ENCODE measurements at regions of chr16 and their contacts with region 1.

Region 1: DNA sequence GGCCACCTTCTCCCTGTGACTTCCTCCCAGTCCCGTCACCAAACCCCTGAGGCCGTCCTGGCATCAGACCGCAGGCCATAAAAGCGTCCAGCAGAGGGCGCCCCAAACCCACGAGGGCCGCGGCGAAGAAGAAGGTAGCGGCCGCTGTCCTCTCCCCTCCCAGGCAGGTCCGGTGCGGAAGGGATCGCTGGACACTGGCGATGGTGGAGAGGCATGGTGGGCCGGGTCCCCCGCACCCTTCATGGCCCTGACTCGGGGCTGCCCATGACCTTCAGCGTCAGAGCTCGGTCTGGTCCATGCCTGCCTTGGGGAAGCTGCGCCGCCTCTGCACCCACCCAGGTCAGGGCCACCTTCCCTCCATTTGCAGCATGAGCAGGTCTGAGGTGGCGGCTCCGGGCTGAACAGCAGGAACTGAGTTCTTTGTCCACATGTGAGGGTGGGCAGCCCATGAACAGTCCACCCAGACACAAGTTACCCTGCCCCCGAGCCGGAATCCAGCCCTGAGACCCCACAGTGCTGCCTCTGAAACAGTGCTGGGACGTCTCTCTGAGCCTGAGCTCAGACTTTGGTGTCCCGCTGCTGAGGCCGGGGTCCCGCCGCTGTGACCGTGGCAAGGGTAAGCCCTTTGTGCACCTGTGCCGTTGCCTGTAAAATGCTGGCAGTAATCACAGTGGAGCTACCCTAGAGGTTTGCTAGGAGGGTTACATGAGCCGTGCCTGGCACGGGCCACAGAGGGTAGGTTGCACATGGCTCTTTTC is 40.8 kb upstream of the CMIP start:
- DNase-seq: peak; percentile 80
- H3K4me3 ChIP-seq: no peak overlapping the region
- H3K27ac ChIP-seq: peak overlapping the region; percentile 75
- H3K4me1 ChIP-seq: peaks cover 33% of the 10 kb centered on the region
- H3K27me3 ChIP-seq: no peaks in the 10 kb centered on the region
- CTCF ChIP-seq: peak; percentile 90 to 95
- POLR2A ChIP-seq: no peak

Region 2: GRCh38 chr16:81223391-81223829 is 180.4 kb before region 1 on chr16:
- CTCF ChIA-PET with region 1: no interaction called
- POLR2A ChIA-PET with region 1: no interaction called
- dilution Hi-C with region 1: no loop called
- intact Hi-C with region 1: no loop called
- DNase-seq: no peak
- H3K4me3 ChIP-seq: no peak overlapping the region
- H3K27ac ChIP-seq: no peak overlapping the region
- H3K4me1 ChIP-seq: no peaks in the 10 kb centered on the region
- H3K27me3 ChIP-seq: peaks cover 0 to 3% of the 10 kb centered on the region in 2 experiments
- CTCF ChIP-seq: no peak
- POLR2A ChIP-seq: no peak

Region 3: DNA sequence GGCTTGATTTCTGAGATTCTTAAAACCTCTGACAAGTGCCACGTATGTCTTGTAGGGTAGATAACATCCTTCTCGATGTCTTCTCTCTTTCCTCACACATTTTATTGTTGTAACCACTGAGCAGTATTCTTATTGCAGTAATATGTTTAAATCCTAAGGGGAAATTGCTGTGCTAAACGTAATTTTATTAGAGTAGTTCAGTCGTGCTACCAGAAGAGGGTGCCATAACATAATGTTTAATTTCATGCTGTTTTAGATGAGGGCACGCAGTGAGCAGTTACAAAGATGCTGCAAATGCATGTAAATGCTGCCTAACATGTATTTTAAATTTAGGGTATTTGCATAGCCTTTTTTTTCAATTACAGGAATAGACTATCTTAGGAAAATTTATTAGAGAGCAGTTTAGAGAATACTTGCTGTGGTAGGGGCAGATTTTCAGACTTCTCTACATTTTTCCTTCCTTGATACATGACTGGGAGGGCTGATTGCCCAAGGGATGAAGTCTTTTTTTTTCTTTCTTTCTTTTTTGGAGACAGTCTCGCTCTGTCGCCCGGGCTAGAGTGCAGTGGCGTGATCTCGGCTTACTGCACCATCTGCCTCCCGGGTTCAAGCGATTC is 37.4 kb before region 1 on chr16:
- CTCF ChIA-PET with region 1: interaction called, 22 read pairs
- POLR2A ChIA-PET with region 1: no interaction called
- dilution Hi-C with region 1: no loop called
- intact Hi-C with region 1: loop called (anchors 1 kb)
- DNase-seq: peak; percentile 77
- H3K4me3 ChIP-seq: no peak overlapping the region
- H3K27ac ChIP-seq: no peak overlapping the region
- H3K4me1 ChIP-seq: peaks cover 14% of the 10 kb centered on the region
- H3K27me3 ChIP-seq: no peaks in the 10 kb centered on the region
- CTCF ChIP-seq: peak; percentile 27 to 38
- POLR2A ChIP-seq: no peak

Region 4: GRCh38 chr16:81415751-81416150 is 12.0 kb after region 1 on chr16:
- CTCF ChIA-PET with region 1: interaction called, 3 read pairs
- POLR2A ChIA-PET with region 1: interaction called, 11 read pairs
- dilution Hi-C with region 1: no loop called
- intact Hi-C with region 1: no loop called
- DNase-seq: no peak
- H3K4me3 ChIP-seq: no peak overlapping the region
- H3K27ac ChIP-seq: no peak overlapping the region
- H3K4me1 ChIP-seq: no peaks in the 10 kb centered on the region
- H3K27me3 ChIP-seq: no peaks in the 10 kb centered on the region
- CTCF ChIP-seq: no peak
- POLR2A ChIP-seq: no peak

Region 5: DNA sequence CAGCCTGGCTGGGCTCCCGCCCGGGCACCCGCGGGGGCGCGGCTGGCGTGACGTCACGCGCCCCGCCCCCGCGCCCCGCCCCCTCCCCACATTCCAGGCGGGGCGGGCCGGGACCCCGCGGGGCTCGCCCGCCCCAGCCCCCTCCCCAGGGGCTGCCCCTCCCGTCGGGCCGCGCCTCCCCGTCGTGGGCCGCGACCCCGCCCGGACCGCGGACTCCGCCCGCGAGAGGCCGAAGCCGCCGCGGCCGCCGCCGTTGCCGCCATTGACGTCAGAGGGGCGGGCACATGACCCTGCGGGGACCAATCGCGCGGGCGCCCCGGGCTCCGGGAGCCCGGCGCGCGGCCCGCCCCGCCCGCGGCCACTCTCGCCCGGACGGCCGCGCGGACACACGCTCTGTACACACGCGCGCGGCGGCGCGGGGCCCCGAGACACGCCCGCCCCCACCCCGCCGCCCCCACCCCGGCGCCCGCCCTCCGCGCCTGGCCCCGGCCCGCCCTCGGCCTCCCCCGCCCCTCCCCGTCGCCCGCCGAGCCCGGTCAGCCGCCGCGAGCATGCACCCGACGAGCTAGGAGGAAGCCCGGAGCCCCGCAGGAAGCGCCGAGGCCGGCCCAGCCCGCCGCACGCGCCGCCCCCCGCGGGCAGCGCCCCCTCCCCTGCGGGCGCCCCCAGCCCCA is 40.8 kb after region 1 on chr16 and contains the start of gene CMIP:
- CTCF ChIA-PET with region 1: interaction called, 3 read pairs
- POLR2A ChIA-PET with region 1: no interaction called
- dilution Hi-C with region 1: no loop called
- intact Hi-C with region 1: loop called (anchors 1 kb)
- DNase-seq: peak; percentile 60
- H3K4me3 ChIP-seq: peak within 1 kb of the TSS; percentile 96 to 97 (median 97)
- H3K27ac ChIP-seq: peak within 1 kb of the TSS; percentile 81
- H3K4me1 ChIP-seq: peaks cover 20% of the 10 kb centered on the region
- H3K27me3 ChIP-seq: peaks cover 13 to 30% of the 10 kb centered on the region in 2 experiments
- CTCF ChIP-seq: no peak
- POLR2A ChIP-seq: no peak
- total RNA-seq, gene CMIP: 82.4 and 101 TPM in 2 replicates

Region 6: DNA sequence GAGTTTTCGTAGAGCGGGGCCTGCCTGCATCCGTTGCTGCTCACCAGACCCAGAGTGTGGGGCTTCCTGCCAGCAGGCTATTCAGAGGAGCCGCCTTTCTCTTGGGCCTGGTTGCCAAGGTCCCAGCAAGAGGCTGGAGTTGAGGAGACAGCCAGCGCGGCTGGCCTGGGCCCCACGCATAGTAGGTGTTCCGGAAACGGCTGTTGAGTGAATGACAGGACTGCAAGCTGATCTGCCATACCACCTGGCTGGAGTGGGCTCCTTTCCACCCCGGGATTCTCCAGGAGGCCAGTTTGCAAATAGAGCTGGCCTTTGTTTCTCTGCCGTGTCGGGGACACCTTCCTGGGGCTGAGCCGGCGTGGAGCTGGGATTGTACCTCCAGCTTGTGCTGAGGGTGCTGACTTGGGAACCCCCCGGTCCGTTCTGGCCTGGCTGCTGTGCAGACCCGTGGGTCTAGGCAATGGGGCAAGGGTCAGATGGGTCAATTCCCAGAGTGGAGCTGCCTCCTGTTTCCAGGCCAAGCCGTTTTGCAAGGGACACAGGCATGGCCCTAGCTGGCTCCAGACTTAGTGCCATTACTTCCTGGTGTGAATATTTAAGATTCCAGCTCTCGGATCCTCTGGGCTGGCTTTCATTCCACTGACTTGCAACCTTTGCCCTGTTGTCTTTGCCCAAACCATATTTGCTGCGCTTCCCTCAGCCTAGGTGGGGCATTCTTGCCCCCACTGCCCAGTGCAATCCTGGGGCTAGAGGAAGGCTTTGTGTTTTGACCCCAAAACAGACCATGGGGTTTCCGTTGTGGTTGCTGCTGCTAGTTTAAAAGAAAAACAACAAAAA is 109.6 kb after region 1 on chr16:
- CTCF ChIA-PET with region 1: no interaction called
- POLR2A ChIA-PET with region 1: no interaction called
- dilution Hi-C with region 1: no loop called
- intact Hi-C with region 1: loop called (anchors 2 kb)
- DNase-seq: peak; percentile 84
- H3K4me3 ChIP-seq: no peak overlapping the region
- H3K27ac ChIP-seq: peak overlapping the region; percentile 51
- H3K4me1 ChIP-seq: peaks cover 66% of the 10 kb centered on the region
- H3K27me3 ChIP-seq: no peaks in the 10 kb centered on the region
- CTCF ChIP-seq: no peak
- POLR2A ChIP-seq: no peak

Region 7: DNA sequence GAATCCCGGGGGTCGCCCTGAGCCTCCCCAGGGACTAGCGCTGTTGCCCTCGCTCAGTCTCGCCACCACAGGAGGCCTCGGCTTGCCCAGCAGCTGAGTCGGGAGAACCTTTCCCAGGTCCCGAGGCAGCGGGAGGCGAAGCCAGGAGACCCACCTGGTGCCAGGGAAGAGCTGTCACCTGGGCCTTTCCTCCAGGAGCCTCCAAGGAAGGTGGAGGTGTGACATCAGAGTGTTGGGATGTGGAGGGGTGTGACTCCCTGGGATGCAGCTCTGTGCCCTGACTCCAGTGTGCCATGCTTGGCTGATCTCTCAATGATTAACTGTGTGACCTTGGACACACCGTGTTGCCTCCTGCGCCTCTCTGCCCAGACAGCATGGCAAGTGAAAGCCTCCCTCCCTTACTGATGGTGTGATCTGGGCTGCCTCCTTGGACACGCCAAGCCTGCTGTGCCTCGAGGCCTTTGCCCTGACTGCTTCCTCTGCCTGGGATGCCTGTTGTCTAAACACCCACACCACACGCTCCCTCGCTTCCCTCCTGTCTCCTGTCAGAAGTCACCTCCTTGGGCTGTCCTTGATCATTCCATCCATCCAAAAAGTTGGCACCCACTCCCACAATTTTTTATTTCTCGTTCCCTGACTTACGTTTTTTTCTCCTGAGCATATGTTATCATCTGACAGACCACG is 128.8 kb after region 1 on chr16:
- CTCF ChIA-PET with region 1: no interaction called
- POLR2A ChIA-PET with region 1: no interaction called
- dilution Hi-C with region 1: no loop called
- intact Hi-C with region 1: no loop called
- DNase-seq: no peak
- H3K4me3 ChIP-seq: no peak overlapping the region
- H3K27ac ChIP-seq: no peak overlapping the region
- H3K4me1 ChIP-seq: no peaks in the 10 kb centered on the region
- H3K27me3 ChIP-seq: no peaks in the 10 kb centered on the region
- CTCF ChIP-seq: no peak
- POLR2A ChIP-seq: no peak

Region 8: DNA sequence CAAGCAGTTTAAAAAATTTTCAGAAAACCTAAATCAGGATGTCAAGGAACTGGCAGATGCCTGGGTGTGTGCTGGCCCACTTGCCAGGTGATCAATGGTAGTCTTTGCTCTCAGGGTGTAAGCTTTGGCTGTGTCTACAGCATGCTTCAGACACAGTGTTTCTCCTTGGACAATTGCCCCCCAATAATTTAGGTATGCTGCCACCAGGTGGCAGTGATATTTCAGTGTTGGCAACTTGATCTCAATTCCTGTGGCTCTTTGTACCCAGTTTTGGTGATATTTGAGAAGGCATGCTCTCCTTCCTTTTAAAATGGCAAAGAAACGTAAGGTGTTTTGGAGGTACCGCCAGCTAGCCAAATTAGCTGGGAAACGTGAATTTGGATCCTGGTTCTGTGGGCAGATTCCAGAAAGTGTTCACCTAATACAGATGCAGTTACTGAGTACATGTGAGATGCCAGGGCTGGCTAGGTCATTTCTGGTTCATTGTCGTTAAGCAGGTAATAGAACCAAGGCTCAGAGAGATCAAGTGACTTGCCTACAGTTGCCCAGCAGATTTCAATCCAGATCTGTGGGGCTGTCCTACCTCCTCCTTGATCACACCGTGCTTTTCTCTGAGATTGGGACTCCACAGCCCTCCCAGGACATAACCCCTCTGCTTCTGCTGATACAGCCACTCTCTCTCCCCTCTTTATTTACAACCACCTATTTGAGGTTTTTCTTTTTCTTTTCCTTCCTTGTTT is 219.7 kb after region 1 on chr16:
- CTCF ChIA-PET with region 1: interaction called, 11 read pairs
- POLR2A ChIA-PET with region 1: interaction called, 6 read pairs
- dilution Hi-C with region 1: no loop called
- intact Hi-C with region 1: loop called (anchors 1 kb)
- DNase-seq: peak; percentile 80
- H3K4me3 ChIP-seq: no peak overlapping the region
- H3K27ac ChIP-seq: no peak overlapping the region
- H3K4me1 ChIP-seq: peaks cover 31% of the 10 kb centered on the region
- H3K27me3 ChIP-seq: no peaks in the 10 kb centered on the region
- CTCF ChIP-seq: peak; percentile 57 to 59
- POLR2A ChIP-seq: no peak

Region 9: DNA sequence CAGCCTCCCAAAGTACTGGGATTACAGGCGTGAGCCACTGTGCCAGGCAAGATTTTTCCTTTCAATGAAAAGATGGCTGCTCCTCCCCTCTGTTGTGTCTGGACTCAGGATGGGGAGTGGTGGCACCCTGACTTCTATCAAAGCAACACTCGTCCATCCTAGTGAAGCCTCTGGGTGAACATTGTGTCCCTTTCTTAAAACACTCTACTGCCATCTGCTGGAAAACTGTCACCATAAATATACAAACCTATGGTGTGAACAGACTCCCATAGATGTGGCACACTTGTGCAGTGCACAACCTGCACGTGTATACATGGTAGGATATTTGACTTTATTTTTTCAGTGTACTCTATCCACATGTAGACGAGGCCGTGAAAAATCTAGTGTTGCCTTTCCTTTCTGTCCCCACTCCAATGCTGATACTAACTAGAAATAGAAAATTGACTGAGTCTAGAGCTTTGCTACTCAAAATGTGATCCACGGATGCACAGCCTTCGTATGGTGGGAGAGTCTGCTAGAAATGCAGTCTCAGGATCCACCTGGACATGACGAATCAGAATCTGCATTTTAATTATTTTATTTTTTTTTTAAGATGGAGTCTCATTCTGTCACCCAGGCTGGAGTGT is 319.4 kb after region 1 on chr16:
- CTCF ChIA-PET with region 1: interaction called, 8 read pairs
- POLR2A ChIA-PET with region 1: no interaction called
- dilution Hi-C with region 1: loop called (anchors 25 kb)
- intact Hi-C with region 1: loop called (anchors 1 kb)
- DNase-seq: peak; percentile 85
- H3K4me3 ChIP-seq: no peak overlapping the region
- H3K27ac ChIP-seq: no peak overlapping the region
- H3K4me1 ChIP-seq: peaks cover 7% of the 10 kb centered on the region
- H3K27me3 ChIP-seq: peaks cover 0 to 3% of the 10 kb centered on the region in 2 experiments
- CTCF ChIP-seq: peak; percentile 47 to 53
- POLR2A ChIP-seq: no peak

Measured in endothelial cell of umbilical vein (primary cell).